ENCODE measurements at regions of chr4 and their contacts with region 1.

Region 1: GRCh38 chr4:139656614-139657486 is 8.8 kb upstream of the MGST2 start:
- DNase-seq: no peak
- H3K4me3 ChIP-seq: no peak overlapping the region
- H3K27me3 ChIP-seq: no peaks in the 10 kb centered on the region
- CTCF ChIP-seq: peak; percentile 92

Region 2: DNA sequence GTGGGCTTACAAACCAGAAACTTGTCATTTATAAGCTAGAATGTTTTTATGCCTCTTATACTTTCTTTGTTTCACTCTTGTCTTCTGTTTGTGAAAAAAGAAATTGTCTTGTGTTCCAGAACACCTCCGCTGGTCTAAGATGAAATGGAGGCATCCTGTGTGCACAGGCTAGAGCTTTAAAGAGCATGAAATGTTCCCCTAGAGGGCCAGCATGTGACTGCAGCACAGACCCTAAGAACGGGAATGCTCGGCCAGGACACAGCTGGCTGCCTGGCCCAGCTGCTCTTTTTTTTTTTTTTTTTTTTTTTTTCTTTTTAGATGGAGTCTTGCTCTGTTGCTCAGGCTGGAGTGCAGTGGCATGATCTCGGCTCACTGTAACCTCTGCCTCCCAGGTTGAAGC is 134.4 kb before region 1 on chr4:
- CTCF ChIA-PET with region 1: no interaction called
- POLR2A ChIA-PET with region 1: no interaction called
- DNase-seq: no peak
- H3K4me3 ChIP-seq: no peak overlapping the region
- H3K27me3 ChIP-seq: no peaks in the 10 kb centered on the region
- CTCF ChIP-seq: no peak

Region 3: DNA sequence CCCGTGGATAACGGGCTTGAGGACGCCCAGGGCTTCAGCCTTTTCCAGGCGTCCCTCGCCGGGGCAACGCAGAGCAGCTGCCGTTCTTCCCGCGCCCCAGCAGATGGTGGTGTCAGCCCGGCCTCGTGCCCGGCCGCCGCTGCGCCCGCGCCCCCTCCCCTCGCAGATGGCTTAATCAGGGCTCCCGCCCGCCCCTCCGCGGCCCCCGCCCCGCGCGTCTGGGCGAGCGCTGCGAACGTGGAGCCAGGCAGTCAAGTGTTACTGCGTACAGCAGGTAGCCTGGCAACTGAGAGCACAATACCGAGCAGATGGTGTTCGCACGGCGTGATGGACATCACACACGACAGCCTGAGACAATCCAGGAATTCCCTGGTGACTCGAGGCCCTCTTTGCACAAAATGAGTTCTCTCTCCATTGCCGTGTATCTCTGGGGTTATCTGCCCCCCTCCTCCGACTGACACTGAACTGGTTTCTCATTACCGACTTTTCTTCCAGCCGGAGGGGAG is 78.1 kb after region 1 on chr4:
- CTCF ChIA-PET with region 1: interaction called, 10 read pairs
- POLR2A ChIA-PET with region 1: no interaction called
- DNase-seq: peak; percentile 16
- H3K4me3 ChIP-seq: peak overlapping the region; percentile 41
- H3K27me3 ChIP-seq: peaks cover 3% of the 10 kb centered on the region; the same call in 1 of the 2 replicates
- CTCF ChIP-seq: peak; percentile 66

Region 4: DNA sequence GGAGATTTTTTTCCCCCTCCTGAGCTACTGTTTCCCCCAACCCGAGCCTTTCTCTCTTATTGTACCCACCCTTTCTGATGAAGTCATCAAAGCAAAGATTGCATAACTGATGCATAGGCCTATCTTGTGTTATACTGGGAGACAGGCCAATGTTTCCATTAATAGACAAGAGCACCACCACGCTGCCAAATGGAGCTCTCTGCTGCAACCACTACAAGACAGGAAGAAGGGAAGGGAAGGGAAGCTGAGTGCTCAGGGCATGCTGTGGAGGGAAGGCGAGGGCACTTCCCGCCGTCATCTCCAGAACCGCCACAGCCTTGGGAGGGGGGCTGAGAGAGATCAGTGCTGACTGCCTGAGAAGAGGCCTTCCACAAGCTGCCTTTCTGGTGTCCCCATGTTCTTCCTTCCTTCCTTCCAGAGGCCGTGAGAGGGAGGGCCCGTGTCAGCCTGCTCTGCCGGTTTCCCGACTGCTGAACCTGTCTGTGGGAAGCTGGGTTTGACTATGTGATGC is 83.7 kb after region 1 on chr4:
- CTCF ChIA-PET with region 1: interaction called, 10 read pairs
- POLR2A ChIA-PET with region 1: no interaction called
- DNase-seq: peak; percentile 64
- H3K4me3 ChIP-seq: no peak overlapping the region
- H3K27me3 ChIP-seq: peaks cover 2% of the 10 kb centered on the region; the same call in 1 of the 2 replicates
- CTCF ChIP-seq: peak; percentile 45